Breast epithelium (tissue), 4 donors: ENCODE measurements at regions of chr17 and their contacts with region 1.

Region 1: GRCh38 chr17:45759761-45760160 is 24.4 kb upstream of the CRHR1 start:
- DNase-seq: no peak
- H3K4me3 ChIP-seq: no peak overlapping the region
- H3K27ac ChIP-seq: no peak overlapping the region
- H3K4me1 ChIP-seq: no peaks in the 10 kb centered on the region
- H3K27me3 ChIP-seq: peaks cover 0 to 14% of the 10 kb centered on the region in 2 donors
- CTCF ChIP-seq: no peak
- POLR2A ChIP-seq: no peak

Region 2: GRCh38 chr17:45794840-45795239 is 35.1 kb after region 1 on chr17:
- intact Hi-C with region 1: no loop called
- DNase-seq: no peak
- H3K4me3 ChIP-seq: no peak overlapping the region
- H3K27ac ChIP-seq: no peak overlapping the region
- H3K4me1 ChIP-seq: peaks cover 0 to 7% of the 10 kb centered on the region in 2 donors
- H3K27me3 ChIP-seq: no peaks in the 10 kb centered on the region
- CTCF ChIP-seq: no peak
- POLR2A ChIP-seq: no peak

Region 3: GRCh38 chr17:45852535-45853297 is 93.0 kb after region 1 on chr17:
- intact Hi-C with region 1: loop called (anchors 10 kb)
- DNase-seq: no peak
- H3K4me3 ChIP-seq: peak overlapping the region in 1 of 3 donors; percentile 19
- H3K27ac ChIP-seq: no peak overlapping the region
- H3K4me1 ChIP-seq: no peaks in the 10 kb centered on the region
- H3K27me3 ChIP-seq: no peaks in the 10 kb centered on the region
- CTCF ChIP-seq: peak; percentile 61 to 75 (median 72)
- POLR2A ChIP-seq: no peak